MCF 10A (cell line): ENCODE measurements at regions of chr12 and their contacts with region 1.

Region 1: DNA sequence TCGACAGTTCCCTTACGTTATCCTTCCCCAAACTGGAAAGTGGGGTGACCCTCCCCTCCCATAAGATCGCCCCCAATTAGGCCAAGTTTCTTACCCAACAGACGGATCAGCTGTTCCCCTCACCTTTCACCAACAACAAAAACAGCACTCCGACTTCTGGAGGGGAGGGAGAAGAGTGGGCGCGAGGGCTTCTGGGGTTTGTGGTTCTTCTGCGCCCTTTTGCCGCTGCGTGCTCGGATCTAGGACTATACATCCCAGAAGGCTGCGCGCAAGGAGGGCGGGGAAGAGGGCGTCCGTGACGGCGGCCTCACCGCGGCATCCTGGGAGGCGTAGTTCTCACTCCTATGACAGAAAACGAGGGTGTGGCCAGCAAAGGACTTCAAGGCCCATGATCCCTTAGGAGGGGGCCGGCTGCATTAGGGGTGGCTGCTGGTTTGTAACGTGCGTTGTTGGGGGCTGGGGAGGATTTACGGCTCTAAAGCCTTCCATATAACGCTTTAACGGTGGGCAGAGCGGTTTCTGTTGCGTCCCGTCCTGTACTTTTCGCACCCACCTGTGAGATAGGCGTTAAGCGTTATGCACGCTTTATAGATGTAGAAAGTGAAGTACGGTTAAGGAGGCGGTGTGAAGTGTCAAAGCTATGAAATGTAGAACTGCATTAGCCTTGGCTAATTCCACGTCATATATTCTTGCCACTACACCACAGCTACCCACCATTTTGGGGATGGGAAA is at the start of gene CALCOCO1:
- DNase-seq: peak; percentile 98
- H3K4me3 Mint-ChIP-seq: peak within 1 kb of the TSS; percentile 95
- H3K27ac Mint-ChIP-seq: peak within 1 kb of the TSS; percentile 99
- H3K4me1 Mint-ChIP-seq: peaks cover 15% of the 10 kb centered on the region
- H3K27me3 Mint-ChIP-seq: no peaks in the 10 kb centered on the region
- CTCF ChIP-seq: no peak
- total RNA-seq, gene CALCOCO1: 49.4 and 74.6 TPM in 2 replicates

Region 2: GRCh38 chr12:53659011-53659551 is 68.4 kb before region 1 on chr12:
- CTCF ChIA-PET with region 1: no interaction called
- POLR2A ChIA-PET with region 1: no interaction called
- intact Hi-C with region 1: no loop called
- DNase-seq: peak; percentile 77
- H3K4me3 Mint-ChIP-seq: no peak overlapping the region
- H3K27ac Mint-ChIP-seq: peak overlapping the region; percentile 82
- H3K4me1 Mint-ChIP-seq: peaks cover 16% of the 10 kb centered on the region
- H3K27me3 Mint-ChIP-seq: no peaks in the 10 kb centered on the region
- CTCF ChIP-seq: no peak

Region 3: GRCh38 chr12:53709671-53710070 is 17.8 kb before region 1 on chr12:
- CTCF ChIA-PET with region 1: no interaction called
- POLR2A ChIA-PET with region 1: interaction called, 29 read pairs
- intact Hi-C with region 1: no loop called
- DNase-seq: no peak
- H3K4me3 Mint-ChIP-seq: no peak overlapping the region
- H3K27ac Mint-ChIP-seq: no peak overlapping the region
- H3K4me1 Mint-ChIP-seq: no peaks in the 10 kb centered on the region
- H3K27me3 Mint-ChIP-seq: peaks cover 48% of the 10 kb centered on the region
- CTCF ChIP-seq: no peak

Region 4: DNA sequence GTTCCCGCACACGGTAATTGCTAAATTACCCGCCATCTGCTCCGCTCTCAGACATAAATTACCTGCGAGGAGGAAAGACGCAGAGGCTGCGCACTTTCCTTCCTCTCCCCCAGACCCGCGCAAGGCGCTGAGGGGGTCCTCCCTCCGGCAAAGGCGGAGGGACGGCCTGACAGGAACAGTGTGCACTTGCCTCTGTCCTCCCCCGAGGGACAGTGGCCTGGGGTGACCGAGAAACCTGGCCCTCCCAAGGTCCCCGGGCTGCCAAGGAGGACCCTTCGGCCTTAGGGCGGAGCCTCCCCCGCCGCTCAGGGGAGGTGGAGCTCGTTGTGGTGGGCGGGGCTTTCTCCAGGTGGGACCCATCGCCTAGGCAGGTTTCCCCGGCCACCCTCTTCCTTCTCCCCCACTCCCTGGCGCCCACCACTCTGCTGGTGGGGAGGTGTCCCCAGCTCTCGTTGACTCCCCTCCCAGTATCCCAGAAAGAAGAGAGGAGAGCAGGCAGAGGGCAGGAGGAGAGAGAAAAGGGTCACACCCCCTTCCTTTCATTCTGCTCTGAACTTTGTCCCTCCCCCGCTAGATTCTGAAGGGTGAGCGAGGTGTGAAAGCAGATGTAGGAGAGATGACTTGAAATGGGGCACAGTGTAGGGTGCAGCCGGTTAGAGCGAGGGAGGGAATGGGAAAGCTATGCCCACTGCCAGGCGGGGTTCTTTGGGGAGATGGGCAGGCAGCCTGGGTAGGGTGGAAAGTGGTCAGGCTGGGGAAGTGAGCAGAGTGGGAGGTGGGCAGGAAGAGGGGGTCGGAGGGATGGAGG is 11.1 kb after region 1 on chr12:
- CTCF ChIA-PET with region 1: interaction called, 411 read pairs
- POLR2A ChIA-PET with region 1: interaction called, 24 read pairs
- intact Hi-C with region 1: no loop called
- DNase-seq: no peak
- H3K4me3 Mint-ChIP-seq: no peak overlapping the region
- H3K27ac Mint-ChIP-seq: no peak overlapping the region
- H3K4me1 Mint-ChIP-seq: peaks cover 10% of the 10 kb centered on the region
- H3K27me3 Mint-ChIP-seq: peaks cover 14% of the 10 kb centered on the region
- CTCF ChIP-seq: no peak

Region 5: DNA sequence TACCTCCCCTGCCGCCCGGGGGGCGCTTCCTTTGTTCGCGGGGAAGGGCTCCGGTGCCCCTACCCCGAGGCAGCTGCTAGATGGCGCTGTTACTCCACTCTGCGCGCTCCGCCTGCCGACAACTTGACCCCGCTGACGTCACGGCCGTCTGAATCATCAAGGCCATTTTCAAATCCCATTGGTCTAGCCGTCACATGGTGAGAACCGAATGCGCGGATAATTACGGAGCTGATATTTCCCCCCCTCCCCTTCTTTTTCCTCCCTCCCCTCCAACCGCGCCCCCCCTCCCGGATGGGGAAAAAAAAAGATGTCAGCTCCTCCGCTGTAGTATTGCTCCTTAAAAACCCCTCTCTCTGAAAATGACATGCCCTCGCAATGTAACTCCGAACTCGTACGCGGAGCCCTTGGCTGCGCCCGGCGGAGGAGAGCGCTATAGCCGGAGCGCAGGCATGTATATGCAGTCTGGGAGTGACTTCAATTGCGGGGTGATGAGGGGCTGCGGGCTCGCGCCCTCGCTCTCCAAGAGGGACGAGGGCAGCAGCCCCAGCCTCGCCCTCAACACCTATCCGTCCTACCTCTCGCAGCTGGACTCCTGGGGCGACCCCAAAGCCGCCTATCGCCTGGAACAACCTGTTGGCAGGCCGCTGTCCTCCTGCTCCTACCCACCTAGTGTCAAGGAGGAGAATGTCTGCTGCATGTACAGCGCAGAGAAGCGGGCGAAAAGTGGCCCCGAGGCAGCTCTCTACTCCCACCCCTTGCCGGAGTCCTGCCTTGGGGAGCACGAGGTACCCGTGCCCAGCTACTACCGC is 257.6 kb after region 1 on chr12 and contains the start of gene HOXC10:
- CTCF ChIA-PET with region 1: no interaction called
- POLR2A ChIA-PET with region 1: no interaction called
- intact Hi-C with region 1: no loop called
- DNase-seq: peak; percentile 93
- H3K4me3 Mint-ChIP-seq: no peak within 1 kb of the TSS
- H3K27ac Mint-ChIP-seq: no peak within 1 kb of the TSS
- H3K4me1 Mint-ChIP-seq: peaks cover 20% of the 10 kb centered on the region
- H3K27me3 Mint-ChIP-seq: no peaks in the 10 kb centered on the region
- CTCF ChIP-seq: peak; percentile 64
- total RNA-seq, gene HOXC10: not detected in 2 replicates